ENCODE measurements at regions of chr19 and their contacts with region 1.

Region 1: GRCh38 chr19:36041831-36042230 is 9.2 kb upstream of the CLIP3 start:
- DNase-seq: peak; percentile 79
- H3K4me3 ChIP-seq: no peak overlapping the region
- CTCF ChIP-seq: no peak

Region 2: DNA sequence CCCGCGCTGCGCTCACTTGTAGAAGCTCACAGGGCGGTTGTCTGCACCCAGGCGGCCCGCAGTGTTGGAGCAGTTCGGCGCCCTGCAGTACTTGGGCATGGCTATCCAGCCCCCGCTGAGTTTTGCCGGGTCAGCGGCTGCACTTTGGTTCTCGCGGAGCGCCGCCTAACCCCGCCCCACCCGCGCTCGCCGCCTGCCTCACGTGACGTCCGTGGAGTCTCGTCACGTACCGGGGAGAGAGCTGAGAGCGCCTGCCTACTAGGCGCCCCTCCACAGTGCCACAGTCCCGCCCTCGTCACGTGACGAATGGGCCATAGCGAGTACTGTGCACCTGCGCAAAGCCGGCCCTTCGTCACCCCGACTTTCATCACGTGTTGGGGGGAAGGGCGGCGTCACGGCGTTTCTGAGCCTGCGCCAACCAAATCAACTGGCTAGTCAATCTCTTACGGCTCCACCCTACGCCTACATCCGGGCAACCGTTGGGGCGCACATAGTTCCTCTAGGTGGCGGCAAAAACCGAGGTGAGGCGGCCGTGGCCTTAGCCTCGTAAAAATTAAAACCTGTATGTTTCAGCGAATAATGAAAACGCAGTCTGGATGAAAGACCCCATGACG is 12.4 kb after region 1 on chr19 and contains the start of gene THAP8:
- CTCF ChIA-PET with region 1: interaction called, 4 read pairs
- POLR2A ChIA-PET with region 1: interaction called, 11 read pairs
- DNase-seq: peak; percentile 92
- H3K4me3 ChIP-seq: peak within 1 kb of the TSS; percentile 74
- CTCF ChIP-seq: peak; percentile 47

Measured in AG04449 (cell line).